ENCODE measurements at regions of chr12 and their contacts with region 1.

Region 1: DNA sequence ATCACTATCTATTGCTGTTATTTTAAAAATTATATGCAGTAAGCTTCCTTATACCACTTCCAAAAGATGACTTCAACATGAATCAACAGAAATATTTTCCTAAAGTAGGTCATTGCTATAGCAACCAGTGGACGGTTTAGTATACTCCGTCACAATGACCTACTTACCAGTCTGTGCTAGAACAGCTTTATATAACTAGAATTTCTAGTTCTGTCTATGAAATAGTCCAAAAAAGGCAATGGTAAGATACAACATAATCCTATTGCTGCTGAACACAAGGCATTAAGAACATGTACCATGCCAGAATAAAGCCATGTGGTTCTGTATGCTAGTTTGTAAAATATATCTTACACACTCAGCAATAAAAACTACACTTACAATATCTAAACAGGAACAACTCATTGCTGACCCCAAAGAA is 40.7 kb upstream of the MTERF2 start:
- DNase-seq: peak in 3 of 5 donors; percentile 9 to 82 (median 36)
- H3K4me3 ChIP-seq: no peak overlapping the region
- H3K4me3 Mint-ChIP-seq: peak overlapping the region; percentile 14 to 78 (median 63)
- H3K27ac ChIP-seq: peak overlapping the region; percentile 86
- H3K27ac Mint-ChIP-seq: peak overlapping the region; percentile 39 to 100 (median 96)
- H3K4me1 ChIP-seq: peaks cover 13% of the 10 kb centered on the region
- H3K4me1 Mint-ChIP-seq: peaks cover 56 to 82% (median 67%) of the 10 kb centered on the region in 3 donors
- H3K27me3 ChIP-seq: no peaks in the 10 kb centered on the region
- H3K27me3 Mint-ChIP-seq: no peaks in the 10 kb centered on the region

Region 2: DNA sequence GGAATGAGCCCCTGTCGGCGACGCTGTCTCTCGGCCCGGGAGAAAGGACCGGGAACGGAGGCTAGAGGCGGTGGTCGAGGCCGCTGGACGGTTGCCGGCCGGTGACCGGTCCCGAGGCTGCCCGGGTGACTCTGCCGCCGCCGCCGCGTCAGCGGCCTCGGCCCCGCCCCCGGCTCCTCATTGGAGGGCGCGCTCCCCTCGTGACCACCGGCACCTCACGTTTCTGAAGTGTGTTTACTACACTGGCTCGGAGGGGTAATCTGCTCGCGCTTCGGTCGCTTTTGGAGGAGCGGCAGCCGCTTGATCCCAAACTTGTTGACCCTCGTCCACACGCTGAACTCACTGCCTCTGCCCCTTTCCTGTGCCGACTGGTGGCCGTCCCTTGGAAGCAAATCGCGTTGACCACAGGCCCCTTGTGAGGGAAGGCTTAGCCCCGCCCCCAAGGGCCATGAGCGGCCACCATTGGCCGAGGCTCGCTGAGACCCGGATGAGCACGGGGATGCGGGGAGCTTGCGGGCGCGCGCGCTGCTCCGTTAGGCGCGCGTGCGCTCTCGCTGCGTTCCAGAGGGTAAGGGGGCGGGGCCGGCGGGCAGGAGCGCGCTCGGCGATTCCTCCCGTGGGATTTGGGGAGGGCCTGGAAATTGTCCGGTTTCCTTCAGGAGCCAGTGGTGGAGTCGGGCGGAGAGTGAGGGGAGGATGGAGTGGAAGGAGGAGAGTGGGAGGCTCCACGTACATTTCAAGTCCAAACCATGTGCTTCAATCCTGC is 66.0 kb after region 1 on chr12 and contains the start of gene CRY1:
- CTCF ChIA-PET with region 1: no interaction called
- POLR2A ChIA-PET with region 1: interaction called, 10 read pairs
- DNase-seq: peak; percentile 89 to 95 (median 93)
- H3K4me3 ChIP-seq: peak within 1 kb of the TSS; percentile 68
- H3K4me3 Mint-ChIP-seq: no peak within 1 kb of the TSS
- H3K27ac ChIP-seq: peak within 1 kb of the TSS; percentile 99
- H3K27ac Mint-ChIP-seq: no peak within 1 kb of the TSS
- H3K4me1 ChIP-seq: peaks cover 22% of the 10 kb centered on the region
- H3K4me1 Mint-ChIP-seq: peaks cover 10 to 14% (median 13%) of the 10 kb centered on the region in 3 donors
- H3K27me3 ChIP-seq: no peaks in the 10 kb centered on the region
- H3K27me3 Mint-ChIP-seq: peaks cover 12 to 15% of the 10 kb centered on the region in 2 donors
- total RNA-seq, gene CRY1: 36.6 to 38.8 TPM